AG04449 (cell line): ENCODE measurements at regions of chr7 and their contacts with region 1.

Region 1: DNA sequence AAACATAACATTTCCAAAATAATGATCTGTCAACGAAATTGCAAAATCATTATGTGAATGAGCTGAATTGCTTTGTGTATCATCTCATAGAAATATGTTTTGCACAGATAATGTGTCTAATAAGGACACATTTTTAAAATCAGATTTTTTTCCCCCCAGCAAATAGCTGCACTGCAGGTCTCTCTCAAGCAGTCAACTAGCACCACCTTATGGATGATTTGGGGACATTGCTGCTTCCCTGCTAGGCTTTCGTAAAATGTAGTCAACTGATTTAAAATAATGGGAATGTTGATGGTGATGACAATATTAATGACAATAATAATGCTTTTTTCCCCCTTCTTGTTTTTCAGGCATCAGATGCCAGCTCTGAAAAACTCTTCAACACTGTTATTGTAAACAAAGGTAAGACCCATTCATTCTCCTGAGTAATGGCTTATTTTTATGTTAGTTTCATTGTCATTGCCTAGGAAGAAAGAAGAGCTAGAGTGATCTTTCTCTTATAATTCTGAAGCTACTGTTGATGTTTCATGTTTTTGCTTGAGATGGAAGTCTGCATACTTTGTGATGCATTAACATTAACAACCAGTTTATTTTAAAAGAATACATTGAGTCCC is 433.6 kb upstream of the GALNT17 start:
- DNase-seq: no peak
- H3K4me3 ChIP-seq: no peak overlapping the region
- CTCF ChIP-seq: peak; percentile 81

Region 2: DNA sequence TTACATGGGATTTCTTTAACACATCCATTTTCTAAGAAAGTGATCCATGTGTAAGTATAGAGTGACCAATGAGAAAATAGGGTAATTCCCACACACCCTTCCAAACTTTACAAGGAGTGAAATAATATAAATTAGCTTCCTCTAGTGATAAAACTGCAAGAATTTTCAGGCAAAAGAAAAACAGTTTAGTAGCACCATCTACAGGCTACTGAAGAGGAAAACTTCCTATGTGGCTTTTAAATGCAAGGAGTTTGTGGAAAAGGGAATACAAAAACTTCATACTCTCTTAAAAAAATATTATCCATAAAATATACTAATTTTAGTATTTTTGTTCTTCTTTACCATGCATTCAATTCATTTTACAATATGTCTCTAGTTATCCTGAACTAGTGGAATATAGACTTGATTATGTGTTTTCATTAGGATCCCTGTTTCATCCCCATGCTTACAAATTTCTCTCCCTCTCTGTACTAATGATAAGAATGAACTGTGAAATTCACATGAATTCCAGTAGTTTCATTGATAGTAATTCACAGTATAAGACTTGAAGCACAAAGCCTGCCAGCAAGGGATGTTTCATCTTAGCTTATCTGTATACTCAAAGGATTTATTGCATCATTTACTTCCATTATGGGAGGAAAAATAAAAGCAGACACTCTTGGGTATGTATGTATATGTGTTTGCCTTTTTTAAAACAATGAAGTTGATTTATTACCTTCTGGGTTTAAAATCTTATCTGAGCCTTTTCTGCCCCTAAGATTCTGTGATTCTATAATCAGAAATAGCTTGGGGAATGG is 657.2 kb before region 1 on chr7:
- CTCF ChIA-PET with region 1: interaction called, 95 read pairs
- POLR2A ChIA-PET with region 1: no interaction called
- DNase-seq: no peak
- H3K4me3 ChIP-seq: no peak overlapping the region
- CTCF ChIP-seq: peak; percentile 24

Region 3: DNA sequence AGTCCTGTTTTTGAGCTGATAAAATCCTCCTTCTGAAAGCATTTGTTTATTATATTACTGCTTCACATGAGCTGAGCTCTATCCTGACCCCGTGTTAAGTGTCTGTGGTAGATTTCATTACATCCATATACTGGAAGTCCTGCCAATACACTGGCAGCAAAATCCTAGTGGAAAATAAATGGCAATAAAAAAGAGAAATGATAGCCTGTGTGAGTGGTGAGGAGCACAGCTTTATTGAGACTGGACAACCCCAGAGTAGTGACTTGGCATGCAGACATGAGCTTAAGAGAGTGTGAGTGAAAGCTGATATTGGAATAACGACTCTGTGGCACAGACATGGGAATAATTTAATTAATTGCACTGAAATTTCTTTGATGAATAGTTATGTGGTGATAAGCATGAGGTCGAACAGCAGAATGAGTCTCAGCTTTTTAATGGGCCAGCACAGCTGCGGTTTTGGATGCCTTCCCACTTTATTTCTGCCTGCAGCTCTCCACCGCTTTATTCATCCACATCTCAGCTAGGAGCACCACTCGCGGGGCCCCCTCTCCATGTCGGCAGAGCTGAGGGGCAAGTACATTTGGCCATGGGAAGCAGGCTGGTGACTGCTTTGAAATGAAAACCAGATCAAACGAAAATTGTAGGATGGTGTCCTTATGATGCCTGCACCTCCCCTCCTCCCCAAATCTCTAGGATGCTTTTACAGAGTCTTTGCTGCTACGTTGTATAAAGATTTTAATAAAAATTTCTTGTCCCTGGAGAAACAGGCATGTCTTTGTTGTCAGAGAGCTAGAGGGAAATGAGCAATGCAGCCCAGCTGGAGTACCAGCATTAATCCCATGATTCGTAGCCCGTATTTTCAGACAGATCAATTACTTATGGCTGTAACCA is 605.8 kb before region 1 on chr7:
- CTCF ChIA-PET with region 1: interaction called, 11 read pairs
- POLR2A ChIA-PET with region 1: no interaction called
- DNase-seq: peak; percentile 78
- H3K4me3 ChIP-seq: no peak overlapping the region; the same call in none of the 2 replicates
- CTCF ChIP-seq: no peak

Region 4: GRCh38 chr7:70193514-70193913 is 504.8 kb before region 1 on chr7:
- CTCF ChIA-PET with region 1: interaction called, 32 read pairs
- POLR2A ChIA-PET with region 1: no interaction called
- DNase-seq: no peak
- H3K4me3 ChIP-seq: no peak overlapping the region
- CTCF ChIP-seq: peak; percentile 14

Region 5: DNA sequence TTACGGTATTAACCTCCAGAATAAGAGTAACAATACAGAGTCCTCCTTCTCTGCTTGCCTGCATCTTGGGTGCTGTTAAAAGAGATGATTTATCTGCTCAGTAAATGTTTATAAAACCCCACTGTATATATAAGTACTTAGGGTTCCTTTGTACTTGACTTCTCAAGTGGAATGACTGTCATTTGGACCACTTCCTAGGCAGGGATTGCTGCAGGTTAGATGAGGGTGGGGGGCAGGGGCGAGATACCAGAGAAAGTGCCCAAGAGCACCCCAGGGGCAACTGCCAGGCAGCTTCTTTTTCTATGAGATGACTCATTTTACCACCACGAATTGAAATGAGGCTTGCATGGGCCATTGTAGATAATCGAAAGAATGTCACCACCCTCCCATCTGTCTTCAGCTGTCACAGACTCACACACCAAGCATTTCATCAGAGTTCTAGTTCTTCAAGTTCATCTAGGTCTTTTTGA is 11.7 kb after region 1 on chr7:
- CTCF ChIA-PET with region 1: interaction called, 21 read pairs
- POLR2A ChIA-PET with region 1: interaction called, 3 read pairs
- DNase-seq: peak; percentile 53
- H3K4me3 ChIP-seq: no peak overlapping the region
- CTCF ChIP-seq: no peak